AG04450 (cell line): ENCODE measurements at regions of chr1 and their contacts with region 1.

Region 1: GRCh38 chr1:153494976-153495535 is 34.6 kb upstream of the S100A7 start:
- DNase-seq: peak; percentile 29
- H3K4me3 ChIP-seq: no peak overlapping the region
- H3K27ac ChIP-seq: no peak overlapping the region
- H3K27me3 ChIP-seq: peaks cover 10% of the 10 kb centered on the region
- CTCF ChIP-seq: peak; percentile 98

Region 2: DNA sequence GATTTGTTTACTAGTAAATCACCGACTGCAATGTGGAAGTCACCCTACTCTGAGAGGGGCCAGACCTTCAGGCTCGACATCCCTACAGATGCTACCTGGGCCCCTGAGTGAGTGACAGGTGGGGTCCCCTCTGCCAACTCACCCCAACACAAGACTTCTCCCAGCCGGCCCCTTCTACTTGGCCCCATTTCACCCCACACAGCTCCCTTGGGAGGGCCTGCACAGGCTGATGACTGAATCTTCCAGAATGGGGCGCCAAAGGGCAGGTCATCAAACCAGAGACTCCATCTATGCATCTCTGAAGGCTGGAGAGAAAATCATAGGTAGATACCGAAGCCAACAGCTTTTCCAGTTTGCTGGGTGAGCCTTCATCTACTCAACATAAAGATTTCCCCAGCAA is 94.8 kb before region 1 on chr1:
- CTCF ChIA-PET with region 1: interaction called, 12 read pairs
- POLR2A ChIA-PET with region 1: no interaction called
- DNase-seq: no peak
- H3K4me3 ChIP-seq: no peak overlapping the region
- H3K27ac ChIP-seq: no peak overlapping the region
- H3K27me3 ChIP-seq: no peaks in the 10 kb centered on the region
- CTCF ChIP-seq: peak; percentile 20; the same call in 1 of the 2 replicates

Region 3: GRCh38 chr1:153465811-153466636 is 29.0 kb before region 1 on chr1:
- CTCF ChIA-PET with region 1: interaction called, 99 read pairs
- POLR2A ChIA-PET with region 1: no interaction called
- DNase-seq: no peak
- H3K4me3 ChIP-seq: no peak overlapping the region
- H3K27ac ChIP-seq: no peak overlapping the region
- H3K27me3 ChIP-seq: peaks cover 9% of the 10 kb centered on the region
- CTCF ChIP-seq: peak; percentile 72

Region 4: DNA sequence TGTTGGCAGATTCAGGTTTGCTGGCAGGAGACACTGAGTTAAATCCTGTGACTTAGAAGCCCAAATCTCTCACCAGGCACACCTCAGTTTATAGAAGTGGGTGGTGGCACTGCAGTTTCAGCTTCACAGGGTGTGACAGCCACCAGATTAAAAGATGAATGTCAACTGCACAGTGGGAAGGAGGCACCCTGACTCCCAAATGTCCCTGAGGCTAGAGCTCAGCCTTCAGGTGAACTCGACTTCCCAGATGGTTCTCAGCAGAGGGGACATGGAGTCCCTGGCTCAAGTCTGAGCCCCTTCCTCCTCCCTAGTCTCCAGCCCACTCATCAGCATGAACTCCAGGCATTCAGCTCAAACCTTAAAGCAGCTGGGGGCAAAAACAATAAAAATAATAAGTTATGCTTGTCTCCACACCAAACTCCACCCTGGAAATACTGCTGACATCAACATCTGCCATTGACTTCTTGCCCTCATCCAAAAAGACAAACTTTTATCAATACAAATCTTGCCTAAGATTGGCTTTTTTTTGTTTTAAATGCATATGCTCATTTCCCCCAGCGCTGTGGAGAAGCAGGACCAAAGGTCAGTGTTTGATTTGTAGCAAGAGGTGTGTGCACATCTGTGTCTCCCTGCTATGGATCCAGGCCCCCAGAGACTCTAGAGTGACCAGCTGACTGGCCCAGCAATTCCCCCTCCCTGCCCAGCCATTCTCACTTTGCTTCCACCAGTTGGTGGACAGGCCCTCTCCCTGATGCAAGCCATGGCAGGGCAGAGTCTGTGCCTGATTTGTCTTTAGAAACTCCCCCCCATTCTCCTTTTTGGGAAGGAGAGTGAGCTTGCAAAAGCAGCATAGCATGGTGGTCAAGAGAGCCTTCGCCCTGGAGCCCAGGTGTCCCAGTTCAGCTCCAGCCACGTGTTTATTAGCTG is 16.1 kb before region 1 on chr1:
- CTCF ChIA-PET with region 1: interaction called, 29 read pairs
- POLR2A ChIA-PET with region 1: no interaction called
- DNase-seq: no peak
- H3K4me3 ChIP-seq: no peak overlapping the region
- H3K27ac ChIP-seq: no peak overlapping the region
- H3K27me3 ChIP-seq: peaks cover 25% of the 10 kb centered on the region
- CTCF ChIP-seq: no peak

Region 5: DNA sequence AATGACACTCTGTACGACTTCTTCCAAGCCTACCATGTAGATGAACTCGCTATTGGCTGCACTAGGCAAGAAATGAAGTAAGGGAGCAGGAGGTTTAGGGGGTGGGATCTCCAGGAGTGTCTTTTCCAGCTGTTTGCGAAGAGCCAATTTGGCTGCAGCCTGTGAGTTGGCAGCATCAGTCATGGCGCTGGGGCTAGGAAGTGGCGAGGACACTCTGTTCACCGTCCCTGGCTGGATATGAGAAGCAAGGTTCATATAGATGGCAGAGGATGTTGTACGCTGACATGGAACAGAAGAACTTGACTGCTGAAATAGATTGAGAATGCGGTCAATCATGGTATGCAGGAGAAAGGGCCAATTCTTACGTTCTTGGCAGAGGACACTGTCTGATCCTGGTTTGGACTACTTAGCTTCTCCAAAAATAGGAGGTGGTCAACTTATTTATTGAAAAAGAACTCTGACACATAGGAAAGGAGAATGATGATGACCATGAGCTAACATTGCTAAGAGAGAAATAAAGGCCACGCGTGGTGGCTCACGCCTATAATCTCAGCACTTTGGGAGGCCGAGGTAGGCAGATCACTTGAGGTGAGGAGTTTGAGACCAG is 321.3 kb after region 1 on chr1:
- CTCF ChIA-PET with region 1: no interaction called
- POLR2A ChIA-PET with region 1: no interaction called
- DNase-seq: no peak
- H3K4me3 ChIP-seq: no peak overlapping the region
- H3K27ac ChIP-seq: no peak overlapping the region
- H3K27me3 ChIP-seq: no peaks in the 10 kb centered on the region
- CTCF ChIP-seq: no peak